Heart left ventricle (tissue), 16 donors: ENCODE measurements at regions of chr9 and their contacts with region 1.

Region 1: DNA sequence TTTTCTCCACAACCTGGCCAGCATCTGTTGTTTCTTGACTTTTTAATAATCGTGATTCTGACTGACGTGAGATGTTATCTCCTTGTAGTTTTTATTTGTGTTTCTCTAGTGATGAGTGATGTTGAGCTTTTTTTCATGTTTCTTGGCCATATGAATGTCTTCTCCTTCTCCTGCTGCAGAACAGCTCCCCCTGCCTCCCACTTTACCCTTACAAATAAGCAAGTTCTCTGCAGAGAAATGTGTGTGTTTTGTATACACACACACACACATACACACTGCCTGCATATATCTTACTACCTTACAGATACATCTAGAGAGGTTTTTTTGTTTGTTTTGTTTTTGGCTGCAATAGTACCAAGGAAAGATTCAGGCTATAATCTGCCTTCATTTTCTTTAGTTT is 88.7 kb upstream of the PHF24 start:
- DNase-seq: no peak
- ATAC-seq: no peak
- H3K4me3 ChIP-seq: no peak overlapping the region
- H3K27ac ChIP-seq: no peak overlapping the region
- H3K4me1 ChIP-seq: peaks cover 0 to 10% (median 0%) of the 10 kb centered on the region in 12 donors
- H3K27me3 ChIP-seq: no peaks in the 10 kb centered on the region
- CTCF ChIP-seq: peak in 8 of 12 donors; percentile 15 to 47 (median 26)
- POLR2A ChIP-seq: no peak

Region 2: GRCh38 chr9:34675048-34675714 is 194.2 kb before region 1 on chr9:
- intact Hi-C with region 1: no loop called
- DNase-seq: peak in 4 of 5 donors; percentile 53 to 79 (median 56)
- ATAC-seq: peak; percentile 29 to 76 (median 64)
- H3K4me3 ChIP-seq: no peak overlapping the region
- H3K27ac ChIP-seq: no peak overlapping the region
- H3K4me1 ChIP-seq: no peaks in the 10 kb centered on the region
- H3K27me3 ChIP-seq: no peaks in the 10 kb centered on the region
- CTCF ChIP-seq: peak in 11 of 12 donors; percentile 14 to 63 (median 42)
- POLR2A ChIP-seq: no peak

Region 3: DNA sequence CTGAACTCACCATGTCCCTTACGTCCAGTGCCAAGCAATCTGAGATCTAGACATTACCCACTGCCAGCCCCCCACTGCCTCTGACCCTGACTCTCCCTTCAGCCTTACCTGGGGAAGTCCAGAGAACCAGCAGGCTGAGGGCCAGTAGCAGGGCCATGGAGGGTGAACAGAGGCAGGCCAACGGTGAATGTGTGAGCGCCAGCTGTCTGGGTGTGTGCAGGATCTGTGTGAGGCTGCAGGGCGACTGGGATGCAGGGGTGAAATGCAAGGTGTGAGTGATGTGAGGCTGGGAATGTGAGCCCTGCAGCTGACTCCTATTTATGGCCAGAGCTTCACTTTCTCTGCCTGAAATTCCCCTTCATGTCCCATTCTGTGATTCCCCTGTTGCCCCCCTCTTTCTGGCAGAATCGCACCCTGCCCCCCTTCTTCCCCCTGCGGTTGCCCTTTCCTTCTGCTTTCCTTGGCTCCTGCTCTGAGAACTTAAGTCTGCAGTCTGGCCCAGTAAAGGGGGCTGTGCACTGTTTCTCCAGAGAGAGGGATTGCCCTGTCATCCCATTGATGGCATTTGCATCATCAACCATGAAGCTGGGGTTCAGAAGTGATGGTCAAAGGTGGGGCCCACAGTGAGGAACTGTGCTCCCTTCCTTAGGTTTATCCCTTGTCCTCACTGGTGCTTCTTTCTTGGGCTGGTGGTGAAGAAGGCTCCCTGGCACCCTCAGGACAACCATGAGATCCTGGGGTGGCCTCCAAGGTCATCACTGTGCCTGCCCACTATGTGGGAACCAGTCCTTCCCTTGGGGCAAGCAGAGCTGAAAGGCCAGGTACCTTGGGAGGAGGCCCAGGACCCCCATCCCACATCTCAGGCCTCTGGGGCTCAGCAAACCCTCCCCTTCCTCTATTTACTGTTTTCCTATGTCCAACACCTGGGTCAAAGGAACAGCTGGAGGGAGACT is 178.1 kb before region 1 on chr9 and contains the start of gene CCL19:
- intact Hi-C with region 1: loop called in 1 of 10 experiments (anchors 10 kb)
- DNase-seq: no peak
- ATAC-seq: peak in 1 of 4 donors; percentile 22
- H3K4me3 ChIP-seq: no peak within 1 kb of the TSS
- H3K27ac ChIP-seq: no peak within 1 kb of the TSS
- H3K4me1 ChIP-seq: peaks cover 0 to 35% (median 0%) of the 10 kb centered on the region in 12 donors
- H3K27me3 ChIP-seq: no peaks in the 10 kb centered on the region
- CTCF ChIP-seq: no peak
- POLR2A ChIP-seq: no peak
- total RNA-seq, gene CCL19: 0.56 to 25.7 (median 2.5) TPM in 4 of 9 donors, not detected in the others

Region 4: GRCh38 chr9:34759432-34760134 is 109.8 kb before region 1 on chr9:
- intact Hi-C with region 1: loop called in 1 of 10 experiments (anchors 5 kb)
- DNase-seq: no peak
- ATAC-seq: peak in 2 of 4 donors; percentile 55 to 57
- H3K4me3 ChIP-seq: no peak overlapping the region
- H3K27ac ChIP-seq: no peak overlapping the region
- H3K4me1 ChIP-seq: peaks cover 0 to 5% (median 0%) of the 10 kb centered on the region in 12 donors
- H3K27me3 ChIP-seq: peaks cover 0 to 12% (median 0%) of the 10 kb centered on the region in 9 donors
- CTCF ChIP-seq: no peak
- POLR2A ChIP-seq: no peak